GM18951 (cell line): ENCODE measurements at regions of chr1 and their contacts with region 1.

Region 1: DNA sequence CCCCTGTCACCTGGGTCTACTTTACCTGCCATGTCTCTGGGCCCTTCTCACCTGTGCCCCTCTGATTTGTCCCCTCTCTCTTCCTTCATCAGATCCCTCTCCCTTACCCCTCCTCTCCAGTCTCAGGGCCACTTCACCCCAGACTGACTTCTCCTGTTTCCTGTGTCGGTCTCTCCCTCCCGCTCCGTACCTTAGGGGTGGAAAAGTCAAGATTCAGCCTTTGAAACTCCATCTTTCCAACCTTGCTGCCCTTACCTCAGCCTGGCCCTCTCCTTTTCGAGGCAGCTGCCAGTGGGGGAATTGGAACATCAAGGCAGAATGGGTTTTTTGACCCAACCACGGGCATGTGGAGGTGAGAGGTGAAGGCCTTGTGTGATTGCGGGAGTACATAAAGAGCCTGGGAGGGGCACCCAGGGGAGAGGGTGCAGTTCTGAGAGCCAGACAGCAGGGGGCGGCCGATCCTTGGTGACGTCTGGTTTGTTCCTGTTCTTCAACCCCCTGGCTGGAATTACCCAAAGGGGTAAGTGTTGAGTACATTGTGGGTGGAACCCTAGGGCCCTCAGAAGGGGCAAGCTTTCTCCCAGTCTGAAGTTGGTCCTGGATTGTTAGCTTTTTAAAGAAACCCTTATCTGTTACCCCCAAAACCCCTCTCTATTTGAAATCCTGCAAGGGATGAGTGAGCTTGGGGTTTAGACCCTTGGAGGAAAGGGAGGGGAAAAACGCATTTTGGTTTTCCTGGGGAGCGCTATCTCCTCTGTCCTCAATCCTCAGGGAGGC is 12.3 kb upstream of the DMBX1 start:
- POLR2A ChIP-seq: no peak

Region 2: GRCh38 chr1:46527474-46528296 is 50.3 kb after region 1 on chr1:
- in situ Hi-C with region 1: loop called (anchors 10 kb)
- POLR2A ChIP-seq: no peak

Region 3: GRCh38 chr1:46724991-46725735 is 247.8 kb after region 1 on chr1:
- in situ Hi-C with region 1: loop called (anchors 10 kb)
- POLR2A ChIP-seq: no peak